HEK293 (cell line): ENCODE measurements at regions of chr9 and their contacts with region 1.

Region 1: GRCh38 chr9:128688512-128689292 is at the start of gene SET:
- H3K4me3 ChIP-seq: peak within 1 kb of the TSS; percentile 85
- H3K27ac ChIP-seq: peak within 1 kb of the TSS; percentile 90
- H3K4me1 ChIP-seq: no peaks in the 10 kb centered on the region
- CTCF ChIP-seq: no peak

Region 2: GRCh38 chr9:128656416-128657343 is 32.0 kb before region 1 on chr9 and contains the start of gene DYNC2I2:
- CTCF ChIA-PET with region 1: no interaction called
- POLR2A ChIA-PET with region 1: interaction called, 12 read pairs
- H3K4me3 ChIP-seq: peak within 1 kb of the TSS; percentile 69
- H3K27ac ChIP-seq: peak within 1 kb of the TSS; percentile 90
- H3K4me1 ChIP-seq: no peaks in the 10 kb centered on the region
- CTCF ChIP-seq: peak; percentile 43; the same call in 1 of the 2 replicates

Region 3: GRCh38 chr9:128675382-128675781 is 13.3 kb before region 1 on chr9:
- CTCF ChIA-PET with region 1: interaction called, 3 read pairs
- POLR2A ChIA-PET with region 1: interaction called, 11 read pairs
- H3K4me3 ChIP-seq: no peak overlapping the region
- H3K27ac ChIP-seq: no peak overlapping the region
- H3K4me1 ChIP-seq: no peaks in the 10 kb centered on the region
- CTCF ChIP-seq: no peak

Region 4: GRCh38 chr9:128723866-128724743 is 35.4 kb after region 1 on chr9 and contains the start of gene ZDHHC12:
- CTCF ChIA-PET with region 1: no interaction called
- POLR2A ChIA-PET with region 1: interaction called, 11 read pairs
- H3K4me3 ChIP-seq: peak within 1 kb of the TSS; percentile 91
- H3K27ac ChIP-seq: peak within 1 kb of the TSS; percentile 40
- H3K4me1 ChIP-seq: no peaks in the 10 kb centered on the region
- CTCF ChIP-seq: no peak; the same call in 1 of the 2 replicates